Prostate gland (tissue), 2 donors: ENCODE measurements at regions of chr21 and their contacts with region 1.

Region 1: GRCh38 chr21:45074048-45074817 is at the start of gene ADARB1:
- DNase-seq: peak; percentile 44
- H3K4me3 ChIP-seq: peak within 1 kb of the TSS; percentile 88 to 99
- H3K27ac ChIP-seq: peak within 1 kb of the TSS; percentile 89 to 96
- H3K4me1 ChIP-seq: no peaks in the 10 kb centered on the region
- H3K27me3 ChIP-seq: no peaks in the 10 kb centered on the region
- CTCF ChIP-seq: no peak
- POLR2A ChIP-seq: peak; percentile 27
- total RNA-seq, gene ADARB1: 21.0 to 30.9 TPM

Region 2: GRCh38 chr21:45109831-45110492 is 35.7 kb after region 1 on chr21:
- intact Hi-C with region 1: loop called (anchors 5 kb)
- DNase-seq: no peak
- H3K4me3 ChIP-seq: no peak overlapping the region
- H3K27ac ChIP-seq: no peak overlapping the region
- H3K4me1 ChIP-seq: peaks cover 8% of the 10 kb centered on the region
- H3K27me3 ChIP-seq: no peaks in the 10 kb centered on the region
- CTCF ChIP-seq: no peak
- POLR2A ChIP-seq: no peak